CD4-positive, alpha-beta T cell (primary cell): ENCODE measurements at regions of chr10 and their contacts with region 1.

Region 1: DNA sequence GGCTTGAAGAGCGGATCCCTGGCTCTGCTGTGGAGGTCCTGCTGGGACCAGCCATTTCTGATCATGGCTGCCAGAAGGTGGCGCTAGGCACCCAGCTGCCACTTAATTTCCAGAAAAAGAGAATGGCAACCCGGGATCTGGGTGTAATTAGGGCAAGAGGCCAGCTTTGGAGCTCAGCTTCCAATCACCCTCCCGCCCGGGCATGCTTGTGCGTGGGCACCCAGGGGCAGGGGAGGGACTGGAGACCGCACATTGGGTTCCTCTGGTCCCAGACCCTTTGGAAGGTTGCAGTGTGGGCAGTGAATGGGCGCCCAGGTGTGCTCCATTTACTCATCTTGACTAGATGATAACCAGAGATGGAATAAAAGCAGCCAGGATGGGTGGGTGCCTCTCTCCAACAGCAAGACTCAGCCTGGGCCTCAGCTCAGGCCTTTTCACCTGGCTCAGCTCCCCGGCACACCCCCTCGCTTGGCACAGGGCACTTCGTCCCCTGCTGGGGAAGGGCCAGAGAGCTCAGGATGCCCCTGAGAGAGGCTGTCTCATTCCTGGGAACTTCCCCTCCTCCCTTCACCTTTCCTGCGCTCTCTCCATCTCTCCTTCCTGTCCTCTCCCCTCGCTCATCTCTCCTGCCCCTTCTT is 14.7 kb downstream of the FAM241B start:
- DNase-seq: peak in 7 of 14 experiments; percentile 14 to 55 (median 29)
- ATAC-seq: no peak
- H3K4me3 ChIP-seq: no peak overlapping the region
- H3K4me3 Mint-ChIP-seq: no peak overlapping the region
- H3K27ac ChIP-seq: no peak overlapping the region
- H3K27ac Mint-ChIP-seq: no peak overlapping the region
- H3K4me1 ChIP-seq: no peaks in the 10 kb centered on the region
- H3K4me1 Mint-ChIP-seq: no peaks in the 10 kb centered on the region
- H3K27me3 ChIP-seq: peaks cover 0 to 3% of the 10 kb centered on the region in 2 experiments
- H3K27me3 Mint-ChIP-seq: peaks cover 5% of the 10 kb centered on the region
- CTCF ChIP-seq: peak; percentile 54

Region 2: GRCh38 chr10:69914398-69915214 is 269.8 kb after region 1 on chr10:
- CTCF ChIA-PET with region 1: no interaction called
- POLR2A ChIA-PET with region 1: no interaction called
- intact Hi-C with region 1: loop called in 1 of 2 experiments (anchors 5 kb)
- DNase-seq: peak; percentile 14 to 64 (median 34)
- ATAC-seq: peak; percentile 66
- H3K4me3 ChIP-seq: no peak overlapping the region
- H3K4me3 Mint-ChIP-seq: no peak overlapping the region
- H3K27ac ChIP-seq: no peak overlapping the region
- H3K27ac Mint-ChIP-seq: no peak overlapping the region
- H3K4me1 ChIP-seq: peaks cover 4% of the 10 kb centered on the region
- H3K4me1 Mint-ChIP-seq: no peaks in the 10 kb centered on the region
- H3K27me3 ChIP-seq: no peaks in the 10 kb centered on the region
- H3K27me3 Mint-ChIP-seq: peaks cover 8% of the 10 kb centered on the region
- CTCF ChIP-seq: peak; percentile 69